ENCODE measurements at regions of chr6 and their contacts with region 1.

Region 1: GRCh38 chr6:72084992-72085569 is 198.7 kb downstream of the RIMS1 start:
- DNase-seq: no peak
- H3K4me3 ChIP-seq: no peak overlapping the region
- H3K27ac ChIP-seq: no peak overlapping the region
- H3K4me1 ChIP-seq: no peaks in the 10 kb centered on the region
- H3K27me3 ChIP-seq: no peaks in the 10 kb centered on the region
- CTCF ChIP-seq: peak; percentile 52 to 53

Region 2: DNA sequence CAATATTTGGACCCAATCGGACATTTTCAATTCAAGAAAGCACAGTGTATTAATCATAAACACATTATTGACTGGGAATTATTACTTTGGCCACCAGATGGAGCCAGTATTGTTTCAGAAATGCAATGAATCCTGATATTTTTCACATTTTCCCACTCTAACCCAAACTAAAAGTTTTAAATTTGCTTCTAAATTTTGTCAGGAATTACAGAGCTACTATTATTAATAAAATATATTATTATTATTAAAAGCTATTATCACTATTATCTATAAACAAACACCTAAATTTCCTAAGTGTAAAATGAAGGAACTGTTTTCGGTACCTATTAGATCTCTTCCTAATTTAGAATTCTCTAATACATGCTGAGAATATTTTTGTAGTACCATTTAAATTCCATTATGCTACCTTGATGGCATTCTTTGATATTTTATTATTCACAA is 551.1 kb before region 1 on chr6:
- intact Hi-C with region 1: loop called (anchors 5 kb)
- DNase-seq: no peak
- H3K4me3 ChIP-seq: no peak overlapping the region
- H3K27ac ChIP-seq: no peak overlapping the region
- H3K4me1 ChIP-seq: peaks cover 0 to 9% (median 6%) of the 10 kb centered on the region in 4 donors
- H3K27me3 ChIP-seq: no peaks in the 10 kb centered on the region
- CTCF ChIP-seq: peak; percentile 65

Region 3: DNA sequence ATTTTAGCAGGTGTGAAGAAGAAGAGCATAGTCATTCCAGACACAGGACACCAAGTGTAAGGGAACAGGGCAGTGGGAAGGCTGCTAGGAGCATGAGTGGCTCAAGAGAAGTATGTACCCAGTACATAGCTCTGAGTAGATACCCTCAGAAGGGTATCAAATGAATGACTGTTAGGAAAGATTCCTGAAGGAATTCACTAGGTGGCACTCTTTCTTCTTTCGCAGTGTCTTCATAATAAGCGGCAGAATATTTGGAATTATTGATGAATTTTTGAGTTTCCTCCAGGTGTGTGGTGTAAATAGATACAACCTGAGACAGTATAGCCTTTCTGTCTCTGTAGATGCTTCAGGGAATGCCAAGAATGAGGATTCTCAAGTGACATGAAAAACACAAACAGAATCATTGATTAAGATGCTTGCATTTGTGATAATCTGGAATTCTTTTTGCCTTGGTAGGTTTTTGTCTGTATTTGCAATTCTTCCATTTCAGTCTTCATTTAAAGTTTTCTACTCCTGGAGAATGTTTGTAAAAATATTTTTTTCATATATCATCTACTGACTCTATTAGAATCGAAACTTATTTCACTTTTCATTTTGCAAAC is 463.1 kb before region 1 on chr6:
- intact Hi-C with region 1: loop called (anchors 10 kb)
- DNase-seq: no peak
- H3K4me3 ChIP-seq: no peak overlapping the region
- H3K27ac ChIP-seq: no peak overlapping the region
- H3K4me1 ChIP-seq: no peaks in the 10 kb centered on the region
- H3K27me3 ChIP-seq: no peaks in the 10 kb centered on the region
- CTCF ChIP-seq: peak; percentile 51 to 53

Region 4: GRCh38 chr6:71706523-71706922 is 378.6 kb before region 1 on chr6:
- intact Hi-C with region 1: no loop called
- DNase-seq: no peak
- H3K4me3 ChIP-seq: no peak overlapping the region
- H3K27ac ChIP-seq: no peak overlapping the region
- H3K4me1 ChIP-seq: no peaks in the 10 kb centered on the region
- H3K27me3 ChIP-seq: no peaks in the 10 kb centered on the region
- CTCF ChIP-seq: no peak